Activated CD4-positive, alpha-beta T cell treated with anti-CD3 and anti-CD28 coated beads, Interleukin-2, amount 10 ng/mL, durations not matched to agents 24 days and 14 days (primary cell): ENCODE measurements at regions of chr5 and their contacts with region 1.

Region 1: GRCh38 chr5:172274921-172275753 is 8.4 kb downstream of the UBTD2 start:
- DNase-seq: peak; percentile 72
- H3K4me3 Mint-ChIP-seq: peak overlapping the region; percentile 4
- H3K27ac Mint-ChIP-seq: peak overlapping the region; percentile 63
- H3K4me1 Mint-ChIP-seq: peaks cover 20% of the 10 kb centered on the region
- H3K27me3 Mint-ChIP-seq: no peaks in the 10 kb centered on the region

Region 2: GRCh38 chr5:171961117-171961516 is 314.0 kb before region 1 on chr5:
- intact Hi-C with region 1: loop called (anchors 1 kb)
- DNase-seq: peak; percentile 67
- H3K4me3 Mint-ChIP-seq: peak overlapping the region; percentile 21
- H3K27ac Mint-ChIP-seq: peak overlapping the region; percentile 70
- H3K4me1 Mint-ChIP-seq: peaks cover 57% of the 10 kb centered on the region
- H3K27me3 Mint-ChIP-seq: no peaks in the 10 kb centered on the region

Region 3: DNA sequence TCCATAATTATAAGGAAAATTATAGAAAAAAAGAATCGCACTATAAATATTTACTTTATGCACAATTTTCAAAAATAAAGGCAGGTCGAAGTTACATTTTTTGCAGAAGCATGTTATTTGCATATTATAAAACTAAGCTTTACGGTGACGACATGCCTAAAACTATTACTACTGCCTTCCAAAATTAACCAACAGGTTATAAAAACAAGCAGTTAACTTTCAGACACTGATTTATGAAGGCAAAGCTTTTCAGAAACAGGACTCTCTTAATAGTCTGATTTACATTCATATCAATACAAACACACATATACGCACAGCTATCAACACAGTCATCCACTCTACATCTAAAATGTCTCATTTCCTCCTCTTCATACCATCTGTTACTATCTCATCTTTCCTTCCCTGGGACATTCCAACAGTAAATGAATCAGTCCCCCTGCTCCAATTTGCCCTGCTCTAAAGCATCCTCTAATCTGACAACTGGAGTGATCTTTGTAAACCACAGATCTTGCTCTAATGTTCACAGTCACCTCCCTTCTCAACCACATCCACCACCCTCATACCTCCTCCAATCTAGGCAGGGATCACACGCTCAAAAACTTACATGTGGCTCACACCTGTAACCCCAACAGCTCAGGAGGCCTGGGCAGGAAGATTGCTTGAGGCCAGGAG is 290.3 kb before region 1 on chr5:
- intact Hi-C with region 1: no loop called
- DNase-seq: peak; percentile 79
- H3K4me3 Mint-ChIP-seq: no peak overlapping the region
- H3K27ac Mint-ChIP-seq: peak overlapping the region; percentile 30
- H3K4me1 Mint-ChIP-seq: peaks cover 34% of the 10 kb centered on the region
- H3K27me3 Mint-ChIP-seq: no peaks in the 10 kb centered on the region

Region 4: GRCh38 chr5:172065501-172065990 is 209.6 kb before region 1 on chr5:
- intact Hi-C with region 1: loop called (anchors 5 kb)
- DNase-seq: no peak
- H3K4me3 Mint-ChIP-seq: no peak overlapping the region
- H3K27ac Mint-ChIP-seq: no peak overlapping the region
- H3K4me1 Mint-ChIP-seq: peaks cover 42% of the 10 kb centered on the region
- H3K27me3 Mint-ChIP-seq: no peaks in the 10 kb centered on the region

Region 5: GRCh38 chr5:172223901-172224873 is 51.0 kb before region 1 on chr5:
- intact Hi-C with region 1: loop called (anchors 2 kb)
- DNase-seq: peak; percentile 69
- H3K4me3 Mint-ChIP-seq: peak overlapping the region; percentile 17
- H3K27ac Mint-ChIP-seq: peak overlapping the region; percentile 73
- H3K4me1 Mint-ChIP-seq: peaks cover 22% of the 10 kb centered on the region
- H3K27me3 Mint-ChIP-seq: peaks cover 7% of the 10 kb centered on the region

Region 6: GRCh38 chr5:172235132-172235780 is 39.9 kb before region 1 on chr5:
- intact Hi-C with region 1: loop called (anchors 2 kb)
- DNase-seq: no peak
- H3K4me3 Mint-ChIP-seq: no peak overlapping the region
- H3K27ac Mint-ChIP-seq: no peak overlapping the region
- H3K4me1 Mint-ChIP-seq: peaks cover 41% of the 10 kb centered on the region
- H3K27me3 Mint-ChIP-seq: no peaks in the 10 kb centered on the region

Region 7: DNA sequence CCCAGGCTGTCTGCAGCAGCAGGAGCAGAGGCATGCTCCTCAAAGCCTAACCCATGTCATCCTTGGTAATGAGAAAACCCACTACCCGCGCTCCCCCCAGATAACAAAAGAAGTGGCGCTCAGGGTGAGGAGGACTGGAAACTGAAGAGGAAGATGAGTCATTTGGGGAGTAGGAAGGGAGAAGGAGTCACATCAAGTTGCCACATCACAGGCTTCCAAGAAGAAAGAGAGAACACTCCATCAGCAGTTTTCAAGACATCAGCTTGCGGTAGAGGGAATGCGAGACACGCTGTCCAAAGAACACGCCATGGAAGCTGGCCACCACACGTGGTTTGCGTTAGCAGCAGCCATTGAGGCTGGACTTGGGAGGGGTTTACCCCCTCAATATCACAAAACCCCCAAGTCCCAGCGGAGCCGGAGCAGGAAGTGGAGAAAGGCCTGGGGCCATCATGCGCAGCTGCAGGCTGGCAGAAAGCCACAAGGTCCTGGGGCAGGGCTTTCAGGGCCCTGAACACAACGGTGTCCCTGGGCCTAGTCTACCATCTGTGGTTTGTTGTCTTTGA is 137.7 kb after region 1 on chr5:
- intact Hi-C with region 1: loop called (anchors 2 kb)
- DNase-seq: peak; percentile 65
- H3K4me3 Mint-ChIP-seq: peak overlapping the region; percentile 63
- H3K27ac Mint-ChIP-seq: peak overlapping the region; percentile 80
- H3K4me1 Mint-ChIP-seq: peaks cover 29% of the 10 kb centered on the region
- H3K27me3 Mint-ChIP-seq: peaks cover 8% of the 10 kb centered on the region